ENCODE measurements at regions of chr3 and their contacts with region 1.

Region 1: GRCh38 chr3:57755668-57756527 is at the start of gene SLMAP:
- DNase-seq: peak; percentile 94
- H3K4me3 ChIP-seq: peak within 1 kb of the TSS; percentile 73 to 97 (median 84)
- H3K27ac ChIP-seq: peak within 1 kb of the TSS; percentile 92
- H3K4me1 ChIP-seq: peaks cover 35% of the 10 kb centered on the region
- H3K27me3 ChIP-seq: no peaks in the 10 kb centered on the region
- CTCF ChIP-seq: no peak
- POLR2A ChIP-seq: peak; percentile 43
- total RNA-seq, gene SLMAP: 45.7 and 54.7 TPM in 2 replicates

Region 2: GRCh38 chr3:57555738-57556458 is 200.0 kb before region 1 on chr3 and contains the start of gene PDE12:
- CTCF ChIA-PET with region 1: no interaction called
- POLR2A ChIA-PET with region 1: no interaction called
- dilution Hi-C with region 1: no loop called
- intact Hi-C with region 1: loop called (anchors 2 kb)
- DNase-seq: peak; percentile 89
- H3K4me3 ChIP-seq: peak within 1 kb of the TSS; percentile 44 to 84 (median 48)
- H3K27ac ChIP-seq: peak within 1 kb of the TSS; percentile 81
- H3K4me1 ChIP-seq: peaks cover 16% of the 10 kb centered on the region
- H3K27me3 ChIP-seq: no peaks in the 10 kb centered on the region
- CTCF ChIP-seq: no peak
- POLR2A ChIP-seq: peak; percentile 90
- total RNA-seq, gene PDE12: 19.0 and 20.4 TPM in 2 replicates

Region 3: DNA sequence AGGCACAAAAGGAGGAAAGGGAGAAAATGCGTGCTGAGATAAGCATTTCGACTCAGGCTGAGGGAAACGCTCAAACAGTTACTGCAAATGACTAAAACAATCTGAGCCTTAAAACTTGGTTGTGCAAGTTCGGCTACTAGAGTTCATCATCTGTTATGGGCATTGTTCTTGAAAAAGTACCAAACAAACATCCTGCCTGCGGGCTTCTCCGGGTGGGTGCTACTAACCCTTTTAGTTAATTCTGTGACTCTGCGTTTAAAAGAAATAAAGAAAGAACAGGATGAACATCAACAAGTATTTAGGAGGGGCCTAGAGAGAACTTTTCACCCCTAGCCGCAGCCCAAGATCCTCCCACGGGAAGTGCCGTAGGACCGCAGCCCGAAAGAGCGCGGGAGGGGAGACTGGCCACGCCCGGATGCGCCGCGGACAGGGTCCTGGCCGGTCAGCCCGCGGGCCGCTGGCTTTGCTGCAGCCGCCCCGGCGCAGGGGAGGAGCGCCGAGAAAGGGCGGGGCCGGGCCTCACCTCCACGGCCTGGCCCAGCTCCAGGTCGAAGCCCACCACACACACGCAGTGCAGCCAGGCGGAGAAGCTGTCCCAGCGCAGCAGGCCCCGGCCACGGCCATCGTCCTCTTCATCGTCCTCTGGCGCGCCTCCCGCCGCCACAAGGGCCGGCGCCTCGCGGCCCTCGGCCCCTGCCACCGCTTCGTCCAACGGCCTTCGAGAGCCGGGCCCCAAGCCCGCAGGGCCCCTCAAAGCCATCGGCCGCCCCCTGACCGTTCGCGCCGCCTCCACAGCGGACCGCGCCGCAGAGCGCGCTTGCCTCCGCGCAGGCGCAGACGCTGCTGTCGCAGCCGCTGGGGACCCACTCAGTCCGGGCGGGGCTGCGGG is 63.4 kb before region 1 on chr3 and contains the start of gene DENND6A:
- CTCF ChIA-PET with region 1: interaction called, 6 read pairs
- POLR2A ChIA-PET with region 1: interaction called, 8 read pairs
- dilution Hi-C with region 1: no loop called
- intact Hi-C with region 1: loop called (anchors 1 kb)
- DNase-seq: peak; percentile 94
- H3K4me3 ChIP-seq: peak within 1 kb of the TSS; percentile 65 to 90 (median 68)
- H3K27ac ChIP-seq: peak within 1 kb of the TSS; percentile 82
- H3K4me1 ChIP-seq: peaks cover 12% of the 10 kb centered on the region
- H3K27me3 ChIP-seq: no peaks in the 10 kb centered on the region
- CTCF ChIP-seq: no peak
- POLR2A ChIP-seq: peak; percentile 93
- total RNA-seq, gene DENND6A: 25.0 and 31.0 TPM in 2 replicates

Region 4: DNA sequence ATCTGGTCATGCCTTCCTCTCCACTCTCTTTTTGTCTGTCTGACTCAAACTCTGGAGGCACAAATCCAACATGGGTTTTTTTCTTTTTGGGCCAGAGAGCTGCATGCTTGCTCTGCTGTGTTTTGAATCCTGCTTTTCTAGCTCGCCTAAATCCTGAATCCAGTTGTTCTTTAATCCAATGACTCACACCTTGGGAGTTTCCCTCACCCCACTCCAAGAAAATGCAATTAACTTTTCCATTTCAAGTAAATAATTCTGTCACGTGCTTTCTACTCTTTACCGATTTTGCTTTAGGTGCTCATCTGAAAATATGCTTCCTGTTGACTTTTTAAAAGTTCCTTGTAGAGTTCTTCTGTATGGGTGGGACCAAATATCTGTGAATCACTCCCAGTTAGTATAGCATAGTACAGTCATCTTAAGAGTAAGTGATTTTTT is 47.8 kb after region 1 on chr3:
- CTCF ChIA-PET with region 1: no interaction called
- POLR2A ChIA-PET with region 1: no interaction called
- dilution Hi-C with region 1: no loop called
- intact Hi-C with region 1: loop called (anchors 5 kb)
- DNase-seq: peak; percentile 94
- H3K4me3 ChIP-seq: peak overlapping the region in 1 of 3 experiments; percentile 34
- H3K27ac ChIP-seq: peak overlapping the region; percentile 52
- H3K4me1 ChIP-seq: peaks cover 27% of the 10 kb centered on the region
- H3K27me3 ChIP-seq: no peaks in the 10 kb centered on the region
- CTCF ChIP-seq: no peak
- POLR2A ChIP-seq: no peak

Region 5: DNA sequence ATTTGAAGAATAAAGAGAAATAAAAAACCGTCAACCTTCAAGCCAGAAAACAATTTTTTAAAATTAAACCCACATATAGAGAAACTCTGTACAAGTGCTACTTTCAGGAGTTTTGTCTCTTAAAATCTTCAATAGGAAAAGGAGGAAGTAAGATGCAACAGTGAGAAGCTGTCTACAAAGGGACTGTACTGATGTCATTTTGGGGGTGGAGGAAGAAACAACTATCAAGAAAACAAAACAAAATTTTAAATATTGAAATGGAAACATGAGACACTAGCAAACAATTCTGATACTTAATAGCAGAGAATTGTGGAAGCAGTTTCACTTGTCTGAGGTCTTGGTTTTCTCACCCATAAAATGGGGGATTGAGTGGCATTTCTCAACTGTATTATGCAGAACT is 84.6 kb after region 1 on chr3:
- CTCF ChIA-PET with region 1: interaction called, 3 read pairs
- POLR2A ChIA-PET with region 1: no interaction called
- dilution Hi-C with region 1: no loop called
- intact Hi-C with region 1: loop called (anchors 5 kb)
- DNase-seq: no peak
- H3K4me3 ChIP-seq: no peak overlapping the region
- H3K27ac ChIP-seq: no peak overlapping the region
- H3K4me1 ChIP-seq: no peaks in the 10 kb centered on the region
- H3K27me3 ChIP-seq: no peaks in the 10 kb centered on the region
- CTCF ChIP-seq: no peak
- POLR2A ChIP-seq: no peak

Region 6: DNA sequence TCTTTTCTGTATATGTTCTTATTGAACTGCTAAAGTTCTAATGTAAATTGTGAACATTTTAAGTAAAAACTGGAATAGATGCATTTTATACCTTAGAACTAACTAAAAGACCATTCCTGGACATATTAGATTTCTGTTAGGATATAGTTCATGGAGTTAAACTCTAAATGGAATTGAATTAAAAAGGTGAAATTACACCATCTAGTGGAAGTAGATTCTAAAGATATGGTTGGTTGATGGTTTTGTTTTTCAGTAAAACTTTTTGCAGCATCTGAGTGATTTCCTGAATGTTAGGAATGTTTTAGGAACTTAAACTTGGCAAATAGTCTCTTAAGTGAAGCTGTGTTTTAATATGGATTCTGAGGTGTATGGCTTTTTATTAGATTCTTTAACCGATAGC is 97.0 kb after region 1 on chr3:
- CTCF ChIA-PET with region 1: interaction called, 14 read pairs
- POLR2A ChIA-PET with region 1: no interaction called
- dilution Hi-C with region 1: no loop called
- intact Hi-C with region 1: no loop called
- DNase-seq: peak; percentile 54
- H3K4me3 ChIP-seq: no peak overlapping the region
- H3K27ac ChIP-seq: no peak overlapping the region
- H3K4me1 ChIP-seq: no peaks in the 10 kb centered on the region
- H3K27me3 ChIP-seq: no peaks in the 10 kb centered on the region
- CTCF ChIP-seq: peak in 1 of 2 donors; percentile 6
- POLR2A ChIP-seq: no peak

Region 7: DNA sequence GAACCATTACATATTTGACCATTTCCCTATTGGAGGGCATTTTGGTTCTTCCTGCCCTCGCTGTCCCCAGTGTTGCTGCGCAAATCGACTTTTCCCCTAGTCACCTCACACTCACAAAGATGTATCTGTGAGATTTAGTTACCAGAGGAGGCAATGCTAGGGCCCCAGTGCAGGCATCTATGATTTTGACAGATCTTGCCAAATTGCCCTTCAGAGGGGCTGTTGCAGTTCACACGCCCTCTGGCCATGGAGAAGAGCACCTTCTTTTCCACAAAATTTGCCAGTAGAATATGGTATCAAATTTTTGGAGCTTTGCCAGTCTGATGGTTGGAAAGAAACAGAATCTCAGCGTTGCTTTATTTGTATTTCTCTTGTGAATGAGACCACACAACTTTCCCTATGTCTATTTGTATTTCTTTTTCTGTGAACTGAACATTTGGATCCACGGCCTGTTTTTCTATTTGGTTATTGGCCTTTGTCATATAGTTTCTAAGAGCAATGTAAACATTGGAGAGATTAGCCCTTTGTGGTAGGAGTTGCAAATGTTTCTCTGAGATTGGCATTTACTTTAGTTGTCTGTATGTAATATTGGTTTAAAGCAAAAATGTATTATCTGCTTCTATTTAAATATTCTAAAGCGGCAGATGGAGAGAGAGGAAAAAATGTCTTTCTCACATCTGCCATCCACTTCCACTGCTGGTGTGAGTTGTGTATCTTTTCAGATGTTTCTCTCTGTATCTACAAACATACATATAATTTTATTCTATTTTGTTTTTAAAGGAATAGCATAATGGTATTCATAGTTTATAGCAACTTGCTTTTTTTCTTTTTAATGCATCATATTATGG is 388.8 kb after region 1 on chr3:
- CTCF ChIA-PET with region 1: no interaction called
- POLR2A ChIA-PET with region 1: no interaction called
- dilution Hi-C with region 1: no loop called
- intact Hi-C with region 1: no loop called
- DNase-seq: no peak
- H3K4me3 ChIP-seq: no peak overlapping the region
- H3K27ac ChIP-seq: no peak overlapping the region
- H3K4me1 ChIP-seq: no peaks in the 10 kb centered on the region
- H3K27me3 ChIP-seq: no peaks in the 10 kb centered on the region
- CTCF ChIP-seq: no peak
- POLR2A ChIP-seq: no peak